ENCODE measurements at regions of chr17 and their contacts with region 1.

Region 1: GRCh38 chr17:37527249-37527851 is 37.7 kb downstream of the DUSP14 start:
- DNase-seq: no peak
- ATAC-seq: peak; percentile 71
- H3K4me3 Mint-ChIP-seq: no peak overlapping the region
- H3K27ac Mint-ChIP-seq: no peak overlapping the region
- H3K4me1 Mint-ChIP-seq: peaks cover 9% of the 10 kb centered on the region
- H3K27me3 Mint-ChIP-seq: no peaks in the 10 kb centered on the region

Region 2: DNA sequence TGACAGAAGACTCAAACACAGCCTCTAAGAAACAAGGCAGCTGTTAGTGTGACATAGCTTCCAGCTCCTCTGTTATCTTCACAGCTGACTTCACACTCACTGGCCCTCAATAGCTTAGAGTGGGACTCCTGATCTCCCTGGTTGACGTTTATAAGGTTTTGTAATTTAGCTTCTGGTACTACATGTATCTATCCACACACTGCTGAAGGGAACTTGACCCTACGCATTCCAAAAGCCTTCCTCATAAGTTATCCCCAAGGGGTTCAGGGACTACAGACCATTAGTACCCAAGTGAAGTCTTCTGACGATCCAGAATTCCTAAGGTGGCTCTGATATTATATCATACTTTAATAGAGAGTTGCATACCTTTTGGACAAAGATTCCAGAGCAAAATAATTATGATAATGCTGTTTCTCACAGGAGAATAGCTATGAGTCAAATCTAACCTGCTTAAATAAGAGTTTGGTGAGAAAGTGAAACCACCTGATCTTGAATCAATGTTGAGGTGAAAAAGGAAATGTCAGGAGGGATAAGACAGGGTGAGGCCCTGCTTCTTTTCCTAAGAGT is 135.2 kb before region 1 on chr17:
- CTCF ChIA-PET with region 1: no interaction called
- DNase-seq: no peak
- ATAC-seq: peak; percentile 66
- H3K4me3 Mint-ChIP-seq: no peak overlapping the region
- H3K27ac Mint-ChIP-seq: peak overlapping the region; percentile 52
- H3K4me1 Mint-ChIP-seq: peaks cover 22% of the 10 kb centered on the region
- H3K27me3 Mint-ChIP-seq: no peaks in the 10 kb centered on the region

Region 3: GRCh38 chr17:37546302-37546701 is 19.0 kb after region 1 on chr17:
- CTCF ChIA-PET with region 1: no interaction called
- DNase-seq: no peak
- ATAC-seq: no peak
- H3K4me3 Mint-ChIP-seq: no peak overlapping the region
- H3K27ac Mint-ChIP-seq: no peak overlapping the region
- H3K4me1 Mint-ChIP-seq: peaks cover 25% of the 10 kb centered on the region
- H3K27me3 Mint-ChIP-seq: no peaks in the 10 kb centered on the region

Region 4: GRCh38 chr17:37609170-37610040 is 82.1 kb after region 1 on chr17 and contains the start of gene SYNRG:
- CTCF ChIA-PET with region 1: interaction called, 13 read pairs
- DNase-seq: peak; percentile 96
- ATAC-seq: peak; percentile 88
- H3K4me3 Mint-ChIP-seq: peak within 1 kb of the TSS; percentile 79
- H3K27ac Mint-ChIP-seq: peak within 1 kb of the TSS; percentile 92
- H3K4me1 Mint-ChIP-seq: peaks cover 35% of the 10 kb centered on the region
- H3K27me3 Mint-ChIP-seq: no peaks in the 10 kb centered on the region
- total RNA-seq, gene SYNRG: 90.8 to 122 TPM

Measured in activated CD8-positive, alpha-beta memory T cell treated with anti-CD3 and anti-CD28 coated beads, Interleukin-2, amount 10 ng/mL, durations not matched to agents 7 days and 5 days (primary cell).